CD4-positive, alpha-beta memory T cell (primary cell): ENCODE measurements at regions of chr9 and their contacts with region 1.

Region 1: DNA sequence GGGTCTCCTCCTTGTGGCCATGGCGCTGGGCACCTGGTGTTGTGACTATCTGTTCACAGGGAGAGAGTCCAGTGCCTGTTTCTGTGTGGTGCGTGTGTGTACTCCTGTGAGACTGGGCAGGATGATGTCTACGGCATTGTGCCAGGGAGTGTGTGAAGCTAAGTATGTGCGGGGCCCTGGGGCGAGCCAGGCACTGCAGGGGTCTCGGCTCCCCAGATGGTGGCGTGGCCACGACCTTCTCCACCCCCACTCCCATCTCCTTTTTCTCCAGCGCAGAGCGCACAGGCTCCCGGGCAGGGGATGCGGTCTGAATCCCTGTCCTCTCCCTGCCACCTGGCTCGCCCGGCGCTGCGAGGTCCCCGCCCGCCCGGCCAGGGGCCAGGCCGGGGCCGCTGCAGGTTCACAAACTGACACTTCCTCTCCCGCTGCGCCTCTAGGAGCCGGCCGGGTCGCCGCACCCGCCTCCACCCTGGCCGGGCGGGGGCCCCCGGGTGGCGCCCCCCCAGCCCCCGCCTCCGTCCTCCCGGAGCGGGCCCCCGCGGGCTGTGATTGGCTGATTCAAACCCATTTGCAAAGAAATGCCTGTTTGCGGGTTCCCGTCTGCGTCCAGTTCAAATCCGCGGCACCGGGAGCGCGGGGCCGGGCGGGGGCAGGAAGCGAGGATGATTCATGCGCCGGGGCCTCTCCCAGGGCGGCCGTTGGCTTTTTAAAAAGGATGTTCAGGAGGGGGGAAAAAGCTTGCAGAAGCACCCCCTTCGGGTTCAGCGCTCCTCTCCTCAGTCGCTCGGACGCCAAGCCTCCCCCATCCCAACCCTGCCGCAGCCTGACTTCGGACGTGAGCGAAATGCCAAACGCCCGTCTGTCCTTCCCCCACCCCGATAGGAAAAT is 790 bp downstream of the PHF19 start:
- DNase-seq: peak; percentile 61 to 89 (median 67)
- H3K4me3 ChIP-seq: peak overlapping the region; percentile 67 to 83
- H3K4me3 Mint-ChIP-seq: peak overlapping the region; percentile 81 to 91 (median 85)
- H3K27ac ChIP-seq: peak overlapping the region; percentile 78
- H3K27ac Mint-ChIP-seq: peak overlapping the region; percentile 85 to 98 (median 93)
- H3K4me1 ChIP-seq: peaks cover 73% of the 10 kb centered on the region
- H3K4me1 Mint-ChIP-seq: peaks cover 61 to 80% (median 66%) of the 10 kb centered on the region in 4 donors
- H3K27me3 ChIP-seq: no peaks in the 10 kb centered on the region
- H3K27me3 Mint-ChIP-seq: no peaks in the 10 kb centered on the region

Region 2: DNA sequence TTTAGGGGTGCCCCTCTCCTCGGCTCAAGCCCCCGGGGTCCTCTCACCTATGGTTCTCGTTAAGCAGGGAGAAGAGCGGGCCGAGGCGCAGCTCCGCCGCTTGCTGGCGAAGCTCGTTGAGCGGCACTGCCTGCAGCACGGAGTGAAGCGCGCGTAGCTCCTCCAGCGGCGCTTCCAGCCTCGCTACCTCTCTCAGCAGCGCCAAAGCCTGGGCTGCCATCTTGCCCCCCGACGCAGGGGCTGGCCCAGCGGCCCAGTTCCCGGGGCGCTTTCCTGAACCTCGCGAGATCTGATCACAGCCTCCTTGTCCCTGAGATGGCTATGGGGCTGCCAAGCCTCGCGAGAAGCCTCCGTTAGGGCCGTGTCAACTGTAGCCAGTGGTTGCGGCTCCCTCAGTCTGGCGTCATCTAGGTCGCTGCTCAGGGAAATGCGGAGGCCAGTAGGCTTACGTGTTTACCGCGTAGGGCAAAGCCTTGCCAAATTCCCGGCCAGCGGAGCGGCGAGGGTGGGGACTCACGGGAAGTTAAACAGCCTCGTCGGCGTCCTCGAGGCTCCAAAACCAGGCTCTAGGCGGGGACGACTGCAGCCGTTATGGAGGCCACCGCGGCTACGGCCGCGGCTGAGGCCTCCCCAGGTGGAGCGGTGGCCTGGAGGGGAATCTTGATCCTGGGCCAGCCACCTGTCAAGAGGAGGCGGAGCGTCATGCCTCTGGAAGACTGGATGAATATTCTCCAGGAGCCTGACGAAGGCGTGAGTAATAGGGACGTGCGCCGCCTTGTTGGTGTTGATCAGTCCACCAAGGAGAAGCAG is 33.3 kb before region 1 on chr9 and contains the start of gene PSMD5:
- CTCF ChIA-PET with region 1: interaction called, 8 read pairs
- POLR2A ChIA-PET with region 1: interaction called, 89 read pairs
- intact Hi-C with region 1: loop called (anchors 2 kb)
- DNase-seq: peak; percentile 93 to 99 (median 99)
- H3K4me3 ChIP-seq: peak within 1 kb of the TSS; percentile 78 to 84
- H3K4me3 Mint-ChIP-seq: peak within 1 kb of the TSS; percentile 92 to 98 (median 96)
- H3K27ac ChIP-seq: peak within 1 kb of the TSS; percentile 98
- H3K27ac Mint-ChIP-seq: peak within 1 kb of the TSS; percentile 96 to 98 (median 98)
- H3K4me1 ChIP-seq: peaks cover 75% of the 10 kb centered on the region
- H3K4me1 Mint-ChIP-seq: peaks cover 62 to 84% (median 73%) of the 10 kb centered on the region in 4 donors
- H3K27me3 ChIP-seq: no peaks in the 10 kb centered on the region
- H3K27me3 Mint-ChIP-seq: no peaks in the 10 kb centered on the region
- total RNA-seq, gene PSMD5: 46.4 to 59.0 TPM

Region 3: DNA sequence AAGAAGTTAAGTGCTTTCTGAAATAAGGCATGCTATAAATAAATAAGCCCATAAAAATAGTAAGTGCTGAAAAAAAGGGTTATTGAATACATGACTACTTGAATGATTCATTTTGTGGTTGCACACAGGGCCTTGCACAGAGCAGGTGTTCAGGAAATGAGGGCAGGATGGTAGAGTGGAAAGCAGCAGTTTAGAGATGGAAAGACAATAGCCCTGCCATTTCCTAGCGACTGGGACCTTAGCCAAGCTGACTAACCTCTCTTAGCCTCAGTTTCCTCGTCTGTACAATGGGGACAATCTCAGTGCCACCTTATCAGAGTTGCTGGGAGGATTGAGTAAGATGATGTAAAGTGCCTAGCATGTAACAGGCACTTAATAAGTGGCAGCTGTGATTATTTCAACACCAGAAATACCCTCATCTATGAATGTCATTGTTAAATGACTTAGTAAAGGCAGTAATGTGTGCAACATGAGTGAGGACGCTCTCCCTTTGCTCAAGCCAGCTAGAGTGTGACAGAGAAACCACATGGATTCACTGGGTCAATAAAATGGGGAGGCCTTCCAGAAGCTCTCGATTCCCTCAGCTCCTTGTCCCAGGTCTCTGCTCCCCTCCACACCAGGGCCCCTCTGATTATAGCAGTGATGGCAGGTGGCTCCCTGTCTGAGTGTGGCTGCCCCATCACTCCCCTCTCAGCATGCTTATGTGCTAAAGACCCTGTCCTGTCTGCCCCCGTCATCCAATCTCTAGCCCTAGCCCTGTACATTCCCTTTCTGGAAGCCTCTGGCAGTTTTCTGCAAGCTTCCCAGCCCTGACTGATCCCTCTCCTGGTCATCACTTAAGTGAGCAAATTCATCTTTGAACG is 16.8 kb after region 1 on chr9:
- CTCF ChIA-PET with region 1: interaction called, 58 read pairs
- POLR2A ChIA-PET with region 1: interaction called, 5,577 read pairs
- intact Hi-C with region 1: loop called (anchors 1 kb)
- DNase-seq: peak; percentile 69 to 93 (median 75)
- H3K4me3 ChIP-seq: peak overlapping the region in 1 of 2 donors; percentile 41
- H3K4me3 Mint-ChIP-seq: peak overlapping the region; percentile 8 to 82 (median 68)
- H3K27ac ChIP-seq: peak overlapping the region; percentile 76
- H3K27ac Mint-ChIP-seq: peak overlapping the region; percentile 86 to 100 (median 98)
- H3K4me1 ChIP-seq: peaks cover 95% of the 10 kb centered on the region
- H3K4me1 Mint-ChIP-seq: peaks cover 49 to 92% (median 71%) of the 10 kb centered on the region in 4 donors
- H3K27me3 ChIP-seq: no peaks in the 10 kb centered on the region
- H3K27me3 Mint-ChIP-seq: no peaks in the 10 kb centered on the region

Region 4: DNA sequence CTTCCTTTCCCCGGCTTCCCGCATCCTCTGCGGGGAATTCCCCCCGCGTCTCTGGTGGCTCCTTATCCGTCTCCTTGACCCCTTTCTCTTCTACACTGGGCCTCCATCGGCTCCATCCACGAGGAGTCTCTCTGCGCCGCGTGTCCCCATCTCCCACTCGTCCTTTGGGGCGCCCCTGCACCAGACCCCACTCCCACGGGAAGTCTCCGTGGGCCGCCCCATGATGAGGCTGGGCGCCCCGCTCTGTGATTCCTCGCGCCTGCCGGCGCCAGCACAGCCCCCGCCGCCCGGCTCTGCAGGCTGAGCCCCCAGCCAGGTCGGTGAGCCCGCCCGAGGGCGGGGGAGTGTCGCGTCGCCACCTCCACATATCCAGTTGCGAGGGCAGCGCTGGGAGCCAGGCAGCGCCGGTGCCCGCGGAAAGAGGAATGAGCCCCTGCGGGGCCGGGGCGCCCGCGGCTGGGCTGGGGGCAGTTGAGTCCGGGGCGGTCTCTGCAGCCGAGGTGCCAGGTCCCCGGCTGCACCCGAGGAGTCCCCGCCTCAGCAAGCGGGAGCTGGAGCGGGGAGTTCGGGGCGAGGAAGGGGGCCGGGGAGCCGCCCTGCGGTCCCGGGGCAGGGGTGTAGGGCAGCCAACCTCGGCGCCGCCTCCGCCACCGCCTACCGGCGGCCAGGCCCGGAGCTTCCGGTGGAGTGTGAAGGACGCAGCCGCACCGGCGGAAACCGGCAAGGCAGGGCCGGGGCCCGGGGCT is 52.5 kb after region 1 on chr9:
- CTCF ChIA-PET with region 1: interaction called, 254 read pairs
- POLR2A ChIA-PET with region 1: interaction called, 5,577 read pairs
- intact Hi-C with region 1: loop called (anchors 1 kb)
- DNase-seq: peak; percentile 75 to 82 (median 79)
- H3K4me3 ChIP-seq: peak overlapping the region; percentile 77 to 88
- H3K4me3 Mint-ChIP-seq: peak overlapping the region; percentile 83 to 97 (median 95)
- H3K27ac ChIP-seq: peak overlapping the region; percentile 99
- H3K27ac Mint-ChIP-seq: peak overlapping the region; percentile 91 to 99 (median 98)
- H3K4me1 ChIP-seq: peaks cover 84% of the 10 kb centered on the region
- H3K4me1 Mint-ChIP-seq: peaks cover 52 to 92% (median 69%) of the 10 kb centered on the region in 4 donors
- H3K27me3 ChIP-seq: no peaks in the 10 kb centered on the region
- H3K27me3 Mint-ChIP-seq: no peaks in the 10 kb centered on the region

Region 5: GRCh38 chr9:121059998-121060636 is 183.9 kb after region 1 on chr9:
- CTCF ChIA-PET with region 1: interaction called, 3 read pairs
- POLR2A ChIA-PET with region 1: no interaction called
- intact Hi-C with region 1: loop called (anchors 2 kb)
- DNase-seq: peak in 4 of 5 donors; percentile 48 to 57 (median 50)
- H3K4me3 ChIP-seq: no peak overlapping the region
- H3K4me3 Mint-ChIP-seq: no peak overlapping the region
- H3K27ac ChIP-seq: no peak overlapping the region
- H3K27ac Mint-ChIP-seq: peak overlapping the region in 1 of 7 donors; percentile 20
- H3K4me1 ChIP-seq: peaks cover 27% of the 10 kb centered on the region
- H3K4me1 Mint-ChIP-seq: peaks cover 16 to 18% (median 17%) of the 10 kb centered on the region in 4 donors
- H3K27me3 ChIP-seq: no peaks in the 10 kb centered on the region
- H3K27me3 Mint-ChIP-seq: no peaks in the 10 kb centered on the region